CD8-positive, alpha-beta T cell (primary cell): ENCODE measurements at regions of chr2 and their contacts with region 1.

Region 1: DNA sequence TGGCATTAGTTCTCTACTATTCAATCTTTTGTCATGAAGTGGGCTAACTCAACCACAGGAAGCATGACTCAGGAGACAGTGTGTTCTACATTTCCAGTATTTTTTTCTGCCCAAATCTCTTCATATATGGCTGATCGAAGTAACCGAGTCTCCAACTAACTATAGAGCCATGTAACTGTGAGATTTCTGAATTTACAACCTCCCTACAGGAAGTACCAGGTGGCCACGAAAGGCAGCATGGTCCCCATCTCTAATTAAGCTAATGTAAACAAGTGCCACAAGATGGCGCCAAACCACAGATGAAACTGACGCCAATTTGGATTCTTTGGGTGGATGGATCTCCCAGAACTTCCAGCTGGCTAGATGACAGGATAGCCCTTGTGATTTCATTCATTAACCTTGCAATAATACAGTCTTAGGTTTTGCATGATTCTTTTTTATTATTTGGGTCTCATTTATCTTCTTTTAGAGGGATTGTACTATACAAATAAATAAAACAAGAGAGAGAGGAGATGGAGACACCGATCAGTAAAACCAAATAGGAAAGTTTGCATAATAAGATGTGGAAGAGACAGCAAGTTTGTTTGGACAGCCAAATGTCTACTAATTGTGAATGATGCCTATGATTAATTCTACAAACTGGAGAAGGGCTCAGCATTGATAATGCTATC is 18.3 kb upstream of the ARHGAP15 start:
- DNase-seq: peak; percentile 16 to 87 (median 66)
- ATAC-seq: peak; percentile 88
- H3K4me3 ChIP-seq: no peak overlapping the region
- H3K4me3 Mint-ChIP-seq: no peak overlapping the region
- H3K27ac ChIP-seq: no peak overlapping the region
- H3K27ac Mint-ChIP-seq: peak overlapping the region; percentile 74
- H3K4me1 ChIP-seq: peaks cover 15% of the 10 kb centered on the region
- H3K4me1 Mint-ChIP-seq: peaks cover 24% of the 10 kb centered on the region
- H3K27me3 ChIP-seq: no peaks in the 10 kb centered on the region
- H3K27me3 Mint-ChIP-seq: no peaks in the 10 kb centered on the region
- CTCF ChIP-seq: peak; percentile 85

Region 2: GRCh38 chr2:142190805-142191204 is 920.1 kb before region 1 on chr2:
- CTCF ChIA-PET with region 1: no interaction called
- POLR2A ChIA-PET with region 1: no interaction called
- intact Hi-C with region 1: no loop called
- DNase-seq: no peak
- ATAC-seq: no peak
- H3K4me3 ChIP-seq: no peak overlapping the region
- H3K4me3 Mint-ChIP-seq: no peak overlapping the region
- H3K27ac ChIP-seq: no peak overlapping the region
- H3K27ac Mint-ChIP-seq: no peak overlapping the region
- H3K4me1 ChIP-seq: no peaks in the 10 kb centered on the region
- H3K4me1 Mint-ChIP-seq: no peaks in the 10 kb centered on the region
- H3K27me3 ChIP-seq: no peaks in the 10 kb centered on the region
- H3K27me3 Mint-ChIP-seq: no peaks in the 10 kb centered on the region
- CTCF ChIP-seq: no peak

Region 3: DNA sequence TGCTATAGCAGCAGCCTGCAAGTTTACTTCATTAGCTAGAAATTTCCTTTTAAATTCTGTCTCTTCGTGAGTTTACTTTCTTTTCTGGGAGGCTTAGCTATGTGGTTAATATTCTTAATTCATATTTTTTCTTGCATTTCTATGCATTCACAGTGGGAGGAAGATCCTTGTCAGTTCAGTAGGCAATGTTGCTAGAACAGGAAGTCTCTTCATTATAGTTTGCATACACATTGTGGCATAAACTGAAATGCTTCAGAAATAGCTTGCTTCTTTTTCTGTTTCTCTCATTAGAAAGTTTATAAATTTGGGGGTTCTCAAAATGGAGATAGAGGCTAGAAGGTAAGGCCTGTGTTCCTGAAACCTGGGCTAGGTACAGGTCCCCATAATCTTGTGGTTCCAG is 10.2 kb after region 1 on chr2:
- CTCF ChIA-PET with region 1: interaction called, 28 read pairs
- POLR2A ChIA-PET with region 1: interaction called, 5 read pairs
- intact Hi-C with region 1: loop called (anchors 1 to 2 kb)
- DNase-seq: no peak
- ATAC-seq: no peak
- H3K4me3 ChIP-seq: no peak overlapping the region
- H3K4me3 Mint-ChIP-seq: peak overlapping the region; percentile 47
- H3K27ac ChIP-seq: no peak overlapping the region
- H3K27ac Mint-ChIP-seq: peak overlapping the region; percentile 38
- H3K4me1 ChIP-seq: peaks cover 42% of the 10 kb centered on the region
- H3K4me1 Mint-ChIP-seq: peaks cover 8% of the 10 kb centered on the region
- H3K27me3 ChIP-seq: no peaks in the 10 kb centered on the region
- H3K27me3 Mint-ChIP-seq: no peaks in the 10 kb centered on the region
- CTCF ChIP-seq: no peak

Region 4: DNA sequence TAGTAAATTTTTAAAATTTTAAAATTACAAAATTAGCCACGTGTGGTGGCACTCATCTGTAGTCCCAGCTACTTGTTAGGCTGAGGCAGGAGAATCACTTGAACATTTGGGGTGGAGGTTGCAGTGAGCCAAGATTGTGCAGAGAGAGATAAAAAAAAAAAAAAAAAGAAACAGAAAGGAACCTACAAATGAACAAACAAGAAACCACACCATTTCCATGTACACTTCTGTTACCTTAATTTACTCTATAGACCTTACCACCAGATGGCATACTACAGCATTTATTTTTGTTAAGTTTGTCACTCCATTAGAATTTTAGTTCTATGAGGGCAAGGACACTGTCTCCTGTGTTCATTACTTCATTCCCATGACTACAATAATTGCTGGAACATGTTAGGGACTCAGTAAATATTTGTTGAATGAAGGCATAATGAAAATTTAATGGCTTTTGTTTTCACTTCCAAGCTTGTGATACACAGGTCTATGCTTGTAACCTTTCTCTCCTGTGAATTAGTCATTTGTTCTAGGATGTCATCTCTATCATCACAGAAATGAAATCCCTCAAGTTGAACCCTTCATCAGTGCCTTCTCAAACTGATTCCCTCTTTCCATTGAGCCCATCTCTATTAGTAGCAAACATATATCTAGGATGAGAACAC is 94.3 kb after region 1 on chr2:
- CTCF ChIA-PET with region 1: interaction called, 15 read pairs
- POLR2A ChIA-PET with region 1: interaction called, 4 read pairs
- intact Hi-C with region 1: no loop called
- DNase-seq: peak in 2 of 9 experiments; percentile 52 to 71
- ATAC-seq: peak; percentile 77
- H3K4me3 ChIP-seq: no peak overlapping the region
- H3K4me3 Mint-ChIP-seq: no peak overlapping the region
- H3K27ac ChIP-seq: peak overlapping the region in 1 of 2 experiments; percentile 53
- H3K27ac Mint-ChIP-seq: peak overlapping the region; percentile 69
- H3K4me1 ChIP-seq: peaks cover 21% of the 10 kb centered on the region
- H3K4me1 Mint-ChIP-seq: peaks cover 66% of the 10 kb centered on the region
- H3K27me3 ChIP-seq: no peaks in the 10 kb centered on the region
- H3K27me3 Mint-ChIP-seq: no peaks in the 10 kb centered on the region
- CTCF ChIP-seq: peak; percentile 52

Region 5: GRCh38 chr2:143223556-143223955 is 112.7 kb after region 1 on chr2:
- CTCF ChIA-PET with region 1: interaction called, 52 read pairs
- POLR2A ChIA-PET with region 1: no interaction called
- intact Hi-C with region 1: loop called (anchors 1 kb)
- DNase-seq: no peak
- ATAC-seq: no peak
- H3K4me3 ChIP-seq: no peak overlapping the region
- H3K4me3 Mint-ChIP-seq: no peak overlapping the region
- H3K27ac ChIP-seq: no peak overlapping the region
- H3K27ac Mint-ChIP-seq: peak overlapping the region; percentile 42
- H3K4me1 ChIP-seq: peaks cover 23% of the 10 kb centered on the region
- H3K4me1 Mint-ChIP-seq: peaks cover 60% of the 10 kb centered on the region
- H3K27me3 ChIP-seq: no peaks in the 10 kb centered on the region
- H3K27me3 Mint-ChIP-seq: no peaks in the 10 kb centered on the region
- CTCF ChIP-seq: no peak

Region 6: DNA sequence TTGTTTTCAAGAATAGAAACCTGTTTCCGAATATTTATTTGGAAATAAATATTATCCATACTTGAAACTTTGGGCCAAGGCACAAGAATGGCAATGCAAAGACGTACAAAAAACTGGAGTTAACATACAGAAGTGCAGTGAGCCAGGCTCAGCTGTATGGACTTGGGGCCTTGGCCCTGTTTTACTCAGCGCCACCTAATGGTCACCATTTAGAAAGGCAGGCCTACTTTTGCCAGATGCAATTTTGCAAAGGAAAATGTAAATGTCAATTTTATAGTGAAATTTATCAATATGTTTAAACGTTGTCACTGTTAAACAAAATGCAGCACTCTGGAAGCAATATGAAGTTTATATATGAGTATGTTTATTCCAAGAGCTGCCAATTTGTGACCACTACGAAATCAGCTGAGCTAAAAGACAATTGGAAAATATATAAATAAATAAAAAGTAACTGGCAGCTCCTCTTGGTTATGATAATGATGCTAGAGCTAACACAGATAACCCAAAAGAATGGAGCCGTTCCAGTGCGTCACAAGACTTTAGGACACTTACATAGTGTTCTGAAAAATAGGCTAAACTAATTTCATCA is 173.3 kb after region 1 on chr2:
- CTCF ChIA-PET with region 1: interaction called, 17 read pairs
- POLR2A ChIA-PET with region 1: no interaction called
- intact Hi-C with region 1: no loop called
- DNase-seq: peak in 4 of 9 experiments; percentile 12 to 73 (median 46)
- ATAC-seq: peak; percentile 88
- H3K4me3 ChIP-seq: no peak overlapping the region
- H3K4me3 Mint-ChIP-seq: no peak overlapping the region
- H3K27ac ChIP-seq: no peak overlapping the region
- H3K27ac Mint-ChIP-seq: no peak overlapping the region
- H3K4me1 ChIP-seq: no peaks in the 10 kb centered on the region
- H3K4me1 Mint-ChIP-seq: peaks cover 55% of the 10 kb centered on the region
- H3K27me3 ChIP-seq: no peaks in the 10 kb centered on the region
- H3K27me3 Mint-ChIP-seq: no peaks in the 10 kb centered on the region
- CTCF ChIP-seq: peak; percentile 77